ENCODE measurements at regions of chr1 and their contacts with region 1.

Region 1: GRCh38 chr1:32500387-32501209 is 35.7 kb downstream of the ZBTB8B start:
- DNase-seq: peak; percentile 49
- H3K4me3 ChIP-seq: peak overlapping the region; percentile 48 to 83 (median 74)
- H3K27ac ChIP-seq: peak overlapping the region; percentile 55
- H3K4me1 ChIP-seq: peaks cover 30% of the 10 kb centered on the region
- H3K27me3 ChIP-seq: no peaks in the 10 kb centered on the region
- CTCF ChIP-seq: no peak
- POLR2A ChIP-seq: peak; percentile 73

Region 2: DNA sequence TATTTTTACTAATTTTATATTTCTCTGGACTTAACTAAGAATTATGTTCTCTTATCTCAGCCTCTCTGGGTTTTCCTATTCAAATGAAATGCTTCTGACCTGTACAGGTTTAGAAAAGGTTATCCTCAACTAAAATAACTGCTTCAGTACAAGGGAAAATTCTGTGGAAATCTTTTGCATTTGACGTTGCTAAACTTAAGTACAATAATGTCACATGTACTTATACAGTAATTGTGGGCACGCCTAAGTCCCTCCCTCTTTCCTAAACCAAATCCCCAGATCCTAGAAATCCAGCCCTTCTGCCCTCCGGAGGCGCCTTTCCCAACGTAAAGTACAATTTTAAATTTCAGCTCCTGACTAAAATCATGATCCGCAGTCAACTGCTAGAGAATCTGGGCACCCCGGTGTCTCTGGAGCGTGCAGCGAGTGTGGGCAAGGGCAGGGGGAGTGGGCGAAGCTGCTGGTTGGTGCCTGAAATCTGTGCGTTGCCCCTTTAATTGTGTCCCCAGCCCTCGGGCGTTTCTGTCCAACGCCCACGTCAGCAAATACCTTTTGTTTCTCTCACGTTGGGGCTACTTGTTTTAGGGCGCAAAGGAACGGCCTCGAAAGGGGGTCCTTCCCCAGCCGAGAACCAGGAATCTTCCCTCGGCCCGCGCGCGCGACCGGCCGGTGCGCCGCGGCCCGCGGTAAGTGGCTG is 38.4 kb after region 1 on chr1 and contains the start of gene ZBTB8A:
- CTCF ChIA-PET with region 1: interaction called, 4 read pairs
- POLR2A ChIA-PET with region 1: no interaction called
- dilution Hi-C with region 1: no loop called
- intact Hi-C with region 1: loop called (anchors 2 kb)
- DNase-seq: peak; percentile 79
- H3K4me3 ChIP-seq: peak within 1 kb of the TSS; percentile 65 to 85 (median 79)
- H3K27ac ChIP-seq: peak within 1 kb of the TSS; percentile 62
- H3K4me1 ChIP-seq: peaks cover 11% of the 10 kb centered on the region
- H3K27me3 ChIP-seq: no peaks in the 10 kb centered on the region
- CTCF ChIP-seq: no peak
- POLR2A ChIP-seq: no peak
- total RNA-seq, gene ZBTB8A: 9.1 and 9.6 TPM in 2 replicates